Naive thymus-derived CD4-positive, alpha-beta T cell (primary cell): ENCODE measurements at regions of chr10 and their contacts with region 1.

Region 1: DNA sequence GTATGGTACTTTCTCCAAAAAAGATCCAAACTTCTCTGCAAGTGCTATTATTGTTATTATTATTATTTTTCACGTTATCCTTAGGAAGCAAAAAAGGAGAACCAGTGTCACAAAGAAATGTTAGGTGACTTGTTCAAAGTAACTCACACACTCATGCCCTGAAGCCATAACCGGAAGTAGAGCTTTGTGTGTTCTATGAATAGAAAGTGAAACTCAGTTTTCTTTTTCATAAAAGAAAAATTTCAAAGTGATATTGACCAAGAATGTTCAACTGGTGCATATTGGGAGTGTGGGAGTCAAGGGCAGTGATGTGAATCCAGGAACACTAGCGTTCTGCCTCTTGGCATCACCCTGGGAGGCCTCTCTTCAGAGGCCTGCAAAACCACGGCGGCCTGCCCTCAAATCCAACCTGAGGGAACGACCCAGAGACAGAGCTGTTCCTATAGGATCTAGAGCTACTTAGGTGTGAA is 106.1 kb downstream of the PRKCQ start:
- DNase-seq: peak in 8 of 9 donors; percentile 48 to 72 (median 62)
- ATAC-seq: peak; percentile 77
- H3K4me3 ChIP-seq: peak overlapping the region; percentile 63
- H3K4me3 Mint-ChIP-seq: peak overlapping the region; percentile 75 to 92 (median 88)
- H3K27ac ChIP-seq: peak overlapping the region; percentile 78
- H3K27ac Mint-ChIP-seq: peak overlapping the region; percentile 87 to 100 (median 96)
- H3K4me1 ChIP-seq: peaks cover 20 to 29% of the 10 kb centered on the region in 2 donors
- H3K4me1 Mint-ChIP-seq: peaks cover 46 to 81% (median 67%) of the 10 kb centered on the region in 7 donors
- H3K27me3 ChIP-seq: no peaks in the 10 kb centered on the region
- H3K27me3 Mint-ChIP-seq: no peaks in the 10 kb centered on the region

Region 2: GRCh38 chr10:6458814-6459213 is 15.1 kb before region 1 on chr10:
- CTCF ChIA-PET with region 1: no interaction called
- POLR2A ChIA-PET with region 1: no interaction called
- intact Hi-C with region 1: loop called in 1 of 2 experiments (anchors 2 kb)
- DNase-seq: no peak
- ATAC-seq: peak; percentile 53
- H3K4me3 ChIP-seq: no peak overlapping the region
- H3K4me3 Mint-ChIP-seq: peak overlapping the region in 1 of 10 donors; percentile 6
- H3K27ac ChIP-seq: peak overlapping the region; percentile 5
- H3K27ac Mint-ChIP-seq: peak overlapping the region in 8 of 9 donors; percentile 8 to 80 (median 40)
- H3K4me1 ChIP-seq: no peaks in the 10 kb centered on the region
- H3K4me1 Mint-ChIP-seq: peaks cover 18 to 45% (median 33%) of the 10 kb centered on the region in 7 donors
- H3K27me3 ChIP-seq: no peaks in the 10 kb centered on the region
- H3K27me3 Mint-ChIP-seq: no peaks in the 10 kb centered on the region

Region 3: GRCh38 chr10:6514844-6515780 is 41.2 kb after region 1 on chr10:
- CTCF ChIA-PET with region 1: no interaction called
- POLR2A ChIA-PET with region 1: interaction called, 6 read pairs
- intact Hi-C with region 1: loop called in 1 of 2 experiments (anchors 5 kb)
- DNase-seq: no peak
- ATAC-seq: peak; percentile 74
- H3K4me3 ChIP-seq: no peak overlapping the region
- H3K4me3 Mint-ChIP-seq: peak overlapping the region in 1 of 10 donors; percentile 12
- H3K27ac ChIP-seq: no peak overlapping the region
- H3K27ac Mint-ChIP-seq: peak overlapping the region in 7 of 9 donors; percentile 17 to 83 (median 50)
- H3K4me1 ChIP-seq: peaks cover 35 to 48% of the 10 kb centered on the region in 2 donors
- H3K4me1 Mint-ChIP-seq: peaks cover 49 to 92% (median 80%) of the 10 kb centered on the region in 7 donors
- H3K27me3 ChIP-seq: no peaks in the 10 kb centered on the region
- H3K27me3 Mint-ChIP-seq: no peaks in the 10 kb centered on the region

Region 4: DNA sequence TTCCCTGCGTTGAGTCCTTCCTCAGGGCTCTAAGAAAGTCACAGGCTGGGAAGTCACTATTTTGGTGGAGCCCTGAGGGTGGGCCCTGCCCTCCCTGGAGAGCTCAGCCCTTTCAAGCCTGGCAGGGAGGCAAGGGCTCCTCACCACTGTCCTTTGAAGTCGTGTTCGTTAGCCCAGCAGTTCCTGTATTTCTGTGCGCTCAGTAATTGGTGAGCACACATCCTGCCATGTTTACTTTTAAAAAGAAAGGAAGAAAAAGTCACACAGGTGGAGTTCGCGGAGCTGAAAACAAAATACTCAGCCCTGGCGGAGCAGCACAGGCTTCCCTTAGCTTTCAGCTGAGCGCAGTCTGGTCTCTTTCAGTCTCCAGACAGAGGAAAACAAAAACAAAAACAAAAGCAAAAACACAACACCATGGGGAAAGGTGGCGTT is 69.1 kb after region 1 on chr10:
- CTCF ChIA-PET with region 1: interaction called, 5 read pairs
- POLR2A ChIA-PET with region 1: interaction called, 5 read pairs
- intact Hi-C with region 1: loop called (anchors 1 kb)
- DNase-seq: peak in 8 of 9 donors; percentile 45 to 83 (median 78)
- ATAC-seq: peak; percentile 90
- H3K4me3 ChIP-seq: peak overlapping the region; percentile 64
- H3K4me3 Mint-ChIP-seq: peak overlapping the region; percentile 79 to 95 (median 88)
- H3K27ac ChIP-seq: peak overlapping the region; percentile 73
- H3K27ac Mint-ChIP-seq: peak overlapping the region; percentile 97 to 100 (median 99)
- H3K4me1 ChIP-seq: peaks cover 55 to 66% of the 10 kb centered on the region in 2 donors
- H3K4me1 Mint-ChIP-seq: peaks cover 43 to 90% (median 76%) of the 10 kb centered on the region in 7 donors
- H3K27me3 ChIP-seq: no peaks in the 10 kb centered on the region
- H3K27me3 Mint-ChIP-seq: no peaks in the 10 kb centered on the region

Region 5: DNA sequence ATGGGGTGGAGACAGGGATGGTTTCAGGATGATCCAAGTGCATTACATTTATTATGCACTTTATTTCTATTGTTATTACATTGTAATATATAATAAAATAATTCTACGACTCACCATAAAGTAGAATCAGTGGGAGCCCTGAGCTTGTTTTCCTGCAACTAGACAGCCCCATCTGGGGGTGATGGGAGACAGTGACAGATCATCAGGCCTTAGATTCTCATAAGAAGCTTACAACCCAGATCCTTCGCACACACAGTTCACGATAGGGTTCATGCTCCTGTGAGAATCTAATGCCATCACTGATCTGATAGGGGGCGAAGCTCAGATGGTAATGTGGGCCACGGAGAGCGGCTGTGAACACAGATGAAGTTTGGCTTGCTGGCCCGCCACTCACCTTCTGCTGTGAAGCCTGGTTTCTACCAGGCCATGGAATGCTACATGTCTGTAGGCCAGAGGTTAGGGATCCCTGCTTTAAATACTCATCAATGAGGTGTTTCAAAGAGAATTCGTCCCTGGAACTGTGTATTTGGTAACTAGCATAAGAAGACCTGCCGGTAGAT is 127.4 kb after region 1 on chr10:
- CTCF ChIA-PET with region 1: interaction called, 16 read pairs
- POLR2A ChIA-PET with region 1: interaction called, 5 read pairs
- intact Hi-C with region 1: loop called in 1 of 2 experiments (anchors 1 kb)
- DNase-seq: peak in 6 of 9 donors; percentile 62 to 71 (median 65)
- ATAC-seq: peak; percentile 65
- H3K4me3 ChIP-seq: no peak overlapping the region
- H3K4me3 Mint-ChIP-seq: peak overlapping the region; percentile 52 to 86 (median 67)
- H3K27ac ChIP-seq: peak overlapping the region; percentile 63
- H3K27ac Mint-ChIP-seq: peak overlapping the region; percentile 60 to 100 (median 96)
- H3K4me1 ChIP-seq: peaks cover 17 to 56% of the 10 kb centered on the region in 2 donors
- H3K4me1 Mint-ChIP-seq: peaks cover 37 to 94% (median 86%) of the 10 kb centered on the region in 7 donors
- H3K27me3 ChIP-seq: no peaks in the 10 kb centered on the region
- H3K27me3 Mint-ChIP-seq: no peaks in the 10 kb centered on the region

Region 6: GRCh38 chr10:6667679-6668270 is 193.8 kb after region 1 on chr10:
- CTCF ChIA-PET with region 1: no interaction called
- POLR2A ChIA-PET with region 1: no interaction called
- intact Hi-C with region 1: loop called in 1 of 2 experiments (anchors 1 kb)
- DNase-seq: peak in 6 of 9 donors; percentile 17 to 45 (median 30)
- ATAC-seq: peak; percentile 59
- H3K4me3 ChIP-seq: no peak overlapping the region
- H3K4me3 Mint-ChIP-seq: no peak overlapping the region
- H3K27ac ChIP-seq: no peak overlapping the region
- H3K27ac Mint-ChIP-seq: no peak overlapping the region
- H3K4me1 ChIP-seq: peaks cover 0 to 10% of the 10 kb centered on the region in 2 donors
- H3K4me1 Mint-ChIP-seq: peaks cover 12 to 35% (median 24%) of the 10 kb centered on the region in 7 donors
- H3K27me3 ChIP-seq: no peaks in the 10 kb centered on the region
- H3K27me3 Mint-ChIP-seq: peaks cover 0 to 13% (median 0%) of the 10 kb centered on the region in 5 donors